GM10248 (cell line): ENCODE measurements at regions of chr22 and their contacts with region 1.

Region 1: DNA sequence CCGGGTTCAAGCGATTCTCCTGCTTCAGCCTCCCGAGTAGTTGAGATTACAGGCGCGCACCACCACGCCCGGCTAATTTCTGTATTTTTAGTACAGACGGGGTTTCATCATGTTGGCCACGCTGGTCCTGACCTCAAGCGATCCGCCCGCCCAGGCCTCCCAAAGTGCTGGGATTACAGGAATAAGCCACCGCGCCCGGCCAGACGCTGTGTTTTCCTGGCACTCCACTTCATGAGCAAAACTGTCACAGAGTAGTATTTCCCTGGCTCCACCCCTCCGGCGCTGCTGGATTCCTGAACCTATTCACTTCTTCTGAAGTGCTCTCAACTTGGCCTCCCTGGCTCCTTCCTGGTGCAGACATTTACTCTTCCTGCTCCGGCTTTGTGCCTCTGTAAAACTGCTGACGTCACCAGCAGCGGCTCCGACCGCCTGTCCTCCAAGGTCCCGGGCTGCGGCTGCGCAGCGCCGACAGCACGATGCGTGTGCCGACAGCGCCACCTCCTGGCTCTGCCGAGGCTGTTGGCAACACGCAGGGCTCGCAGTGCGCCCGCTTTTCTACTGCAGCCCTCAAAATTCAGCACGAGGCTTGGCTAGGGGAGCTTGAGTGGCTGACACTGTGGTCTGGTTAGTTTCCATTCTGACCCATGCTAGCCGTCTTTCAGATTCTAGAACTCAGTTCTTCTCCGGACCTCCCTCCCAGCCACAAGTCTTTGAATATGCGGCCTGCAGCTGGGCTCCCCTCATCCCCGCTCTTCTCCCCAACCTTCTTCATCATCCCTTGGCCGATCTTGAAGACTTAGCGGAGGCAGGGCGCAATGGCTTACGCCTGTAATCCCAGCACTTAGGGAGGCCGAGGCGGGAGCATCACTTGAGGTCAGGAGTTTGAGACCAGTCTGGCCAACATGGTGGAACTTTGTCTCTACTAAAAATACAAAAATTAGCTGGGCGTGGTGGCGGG is 36.6 kb downstream of the APOL3 start:
- DNase-seq: peak; percentile 93
- CTCF ChIP-seq: peak; percentile 97

Region 2: DNA sequence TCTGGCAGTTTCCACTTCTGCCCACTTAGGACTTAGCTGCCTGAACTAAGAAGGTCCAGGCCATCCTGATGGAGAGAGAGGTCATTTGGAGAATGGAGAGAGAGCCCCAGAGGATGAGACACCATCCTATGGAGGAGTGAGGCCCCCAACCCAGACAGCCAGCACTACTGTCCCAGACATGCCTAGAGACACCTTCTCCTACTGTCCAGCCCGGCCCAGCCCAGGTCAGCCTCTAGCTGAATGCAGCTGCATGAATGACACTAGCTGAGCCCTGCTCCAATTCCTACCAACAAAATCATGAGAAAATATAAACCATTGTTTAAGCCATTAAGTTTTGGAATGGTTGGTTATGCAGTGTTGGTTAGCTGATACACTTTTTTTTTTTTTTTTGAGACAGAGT is 10.8 kb before region 1 on chr22:
- CTCF ChIA-PET with region 1: interaction called, 11 read pairs
- POLR2A ChIA-PET with region 1: no interaction called
- DNase-seq: no peak
- CTCF ChIP-seq: no peak

Region 3: DNA sequence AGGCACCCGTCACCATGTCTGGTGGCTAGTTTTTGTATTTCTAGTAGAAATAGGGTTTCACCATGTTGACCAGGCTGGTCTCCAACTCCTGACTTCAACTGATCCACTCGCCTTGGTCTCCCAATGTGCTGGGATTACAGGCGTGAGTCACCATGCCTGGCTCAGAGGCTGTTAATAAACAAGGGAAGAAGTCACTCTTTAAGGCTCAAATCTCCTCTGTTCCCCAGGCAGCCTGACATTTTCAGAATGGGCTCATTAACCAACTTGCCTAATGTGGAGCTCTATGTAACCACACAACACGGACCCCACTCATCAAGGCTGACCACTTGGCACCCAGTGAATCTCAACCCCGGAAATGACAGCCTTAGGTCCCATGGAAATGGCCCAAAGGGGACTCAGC is 12.5 kb after region 1 on chr22:
- CTCF ChIA-PET with region 1: interaction called, 21 read pairs
- POLR2A ChIA-PET with region 1: no interaction called
- DNase-seq: no peak
- CTCF ChIP-seq: no peak